Left ventricle myocardium inferior (tissue), 1 donor: ENCODE measurements at regions of chr9 and their contacts with region 1.

Region 1: DNA sequence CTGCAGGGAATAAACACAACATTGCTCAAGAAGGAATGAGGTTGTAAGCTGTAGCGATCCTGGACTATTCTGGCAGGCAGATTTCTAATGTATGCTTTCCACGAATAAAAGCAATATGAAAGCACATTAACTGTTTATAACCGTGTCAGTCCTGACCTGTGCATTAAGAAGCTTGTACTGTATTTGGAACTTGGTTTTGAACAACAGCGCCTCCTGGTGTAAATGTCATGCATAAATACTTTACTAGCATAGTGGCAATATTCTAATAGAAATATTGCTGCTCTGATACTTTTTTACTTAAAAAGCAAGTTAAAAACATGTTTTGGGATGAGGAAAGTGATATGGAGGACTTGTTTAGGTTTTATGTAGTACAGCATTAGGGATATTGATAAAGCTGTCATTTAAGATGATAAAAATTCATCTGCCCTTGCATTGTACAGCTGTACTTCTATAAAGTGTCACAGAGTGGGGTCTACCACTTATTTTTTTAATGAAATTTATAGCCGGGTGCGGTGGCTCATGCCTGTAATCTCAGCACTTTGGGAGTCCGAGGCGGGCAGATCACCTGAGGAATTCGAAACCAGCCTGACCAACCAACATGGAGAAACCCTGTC is 70.7 kb upstream of the GNE start:
- DNase-seq: no peak
- H3K4me3 ChIP-seq: no peak overlapping the region
- H3K27ac ChIP-seq: no peak overlapping the region
- H3K4me1 ChIP-seq: peaks cover 3% of the 10 kb centered on the region
- H3K27me3 ChIP-seq: no peaks in the 10 kb centered on the region
- CTCF ChIP-seq: peak; percentile 82

Region 2: DNA sequence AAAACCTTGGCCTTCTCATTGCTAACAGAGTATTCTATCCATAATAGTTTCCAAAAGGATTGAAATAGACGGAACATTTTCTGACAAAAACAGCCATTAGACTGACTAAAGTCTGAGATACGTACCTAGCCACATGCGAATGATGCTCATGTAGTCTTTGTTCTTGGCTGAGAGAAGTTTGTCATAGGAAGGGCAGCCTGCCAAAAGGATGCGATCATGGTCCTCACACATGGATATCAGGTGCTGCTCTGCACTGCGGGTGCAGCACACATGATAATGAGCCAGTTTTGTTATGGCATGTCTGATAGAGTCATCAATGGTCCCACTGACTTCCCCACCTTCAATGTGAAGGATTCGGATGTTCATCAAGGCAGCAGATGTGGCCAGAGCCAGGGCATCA is 83.0 kb before region 1 on chr9:
- intact Hi-C with region 1: loop called (anchors 5 kb)
- DNase-seq: no peak
- H3K4me3 ChIP-seq: no peak overlapping the region
- H3K27ac ChIP-seq: no peak overlapping the region
- H3K4me1 ChIP-seq: peaks cover 18% of the 10 kb centered on the region
- H3K27me3 ChIP-seq: no peaks in the 10 kb centered on the region
- CTCF ChIP-seq: no peak

Region 3: GRCh38 chr9:36436909-36437308 is 108.0 kb after region 1 on chr9:
- intact Hi-C with region 1: no loop called
- DNase-seq: peak; percentile 41
- H3K4me3 ChIP-seq: no peak overlapping the region
- H3K27ac ChIP-seq: no peak overlapping the region
- H3K4me1 ChIP-seq: peaks cover 21% of the 10 kb centered on the region
- H3K27me3 ChIP-seq: no peaks in the 10 kb centered on the region
- CTCF ChIP-seq: no peak